Common myeloid progenitor, CD34-positive (primary cell): ENCODE measurements at regions of chr17 and their contacts with region 1.

Region 1: GRCh38 chr17:16304830-16305229 is 48.4 kb downstream of the CENPV start:
- DNase-seq: peak; percentile 30 to 52 (median 51)
- H3K4me3 ChIP-seq: no peak overlapping the region
- H3K27ac ChIP-seq: no peak overlapping the region
- H3K4me1 ChIP-seq: no peaks in the 10 kb centered on the region
- H3K27me3 ChIP-seq: no peaks in the 10 kb centered on the region

Region 2: DNA sequence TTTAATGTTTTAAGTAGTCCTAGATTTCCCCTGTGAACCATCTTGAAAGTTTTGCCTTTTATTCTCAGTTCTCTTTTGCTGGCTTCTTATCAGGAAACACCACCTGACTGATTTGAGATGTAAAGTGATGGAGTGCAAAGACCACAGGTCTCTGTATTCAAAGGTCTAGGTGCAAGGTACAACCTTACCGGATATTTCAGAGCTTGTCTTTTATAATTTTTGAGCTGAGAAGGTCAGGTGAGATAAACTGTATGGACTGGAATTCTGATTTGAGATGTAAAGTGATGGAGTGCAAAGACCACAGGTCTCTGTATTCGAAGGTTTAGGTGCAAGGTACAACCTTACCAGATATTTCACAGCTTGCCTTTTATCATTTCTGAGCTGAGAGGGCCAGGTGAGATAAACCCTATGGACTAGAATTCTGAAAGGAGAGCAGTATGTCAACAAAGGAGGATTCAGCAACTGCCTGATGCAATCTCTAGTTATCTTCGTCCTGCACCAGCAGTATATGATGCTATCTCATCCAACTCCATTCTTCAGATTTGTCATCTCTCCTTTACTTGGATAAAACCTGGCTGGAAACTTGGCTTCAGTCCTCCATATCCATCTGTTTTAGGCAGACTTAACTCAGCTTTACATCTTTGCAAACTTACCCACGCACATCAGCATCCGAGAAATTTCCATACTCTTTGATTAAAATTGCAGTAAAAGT is 15.8 kb before region 1 on chr17:
- CTCF ChIA-PET with region 1: interaction called, 25 read pairs
- POLR2A ChIA-PET with region 1: no interaction called
- DNase-seq: peak in 1 of 3 donors; percentile 37
- H3K4me3 ChIP-seq: no peak overlapping the region
- H3K27ac ChIP-seq: no peak overlapping the region
- H3K4me1 ChIP-seq: peaks cover 23 to 45% (median 38%) of the 10 kb centered on the region in 4 experiments
- H3K27me3 ChIP-seq: no peaks in the 10 kb centered on the region

Region 3: GRCh38 chr17:16325964-16326363 is 21.1 kb after region 1 on chr17:
- CTCF ChIA-PET with region 1: interaction called, 14 read pairs
- POLR2A ChIA-PET with region 1: no interaction called
- DNase-seq: no peak
- H3K4me3 ChIP-seq: no peak overlapping the region
- H3K27ac ChIP-seq: no peak overlapping the region
- H3K4me1 ChIP-seq: no peaks in the 10 kb centered on the region
- H3K27me3 ChIP-seq: no peaks in the 10 kb centered on the region